Panc1 (cell line): ENCODE measurements at regions of chr19 and their contacts with region 1.

Region 1: GRCh38 chr19:3880471-3881271 is at the start of gene ATCAY:
- DNase-seq: no peak
- ATAC-seq: no peak; the same call in 1 of the 2 replicates
- H3K4me3 ChIP-seq: peak within 1 kb of the TSS in 1 of 2 experiments; percentile 4; a peak in 1 of 4 replicates
- H3K27ac ChIP-seq: no peak within 1 kb of the TSS
- H3K4me1 ChIP-seq: no peaks in the 10 kb centered on the region
- H3K27me3 ChIP-seq: no peaks in the 10 kb centered on the region
- CTCF ChIP-seq: no peak
- total RNA-seq, gene ATCAY: 0.15 TPM

Region 2: GRCh38 chr19:3893509-3894179 is 13.0 kb after region 1 on chr19:
- CTCF ChIA-PET with region 1: interaction called, 12 read pairs
- POLR2A ChIA-PET with region 1: no interaction called
- in situ Hi-C with region 1: no loop called
- intact Hi-C with region 1: no loop called
- DNase-seq: no peak
- ATAC-seq: peak; percentile 34; the same call in 1 of the 2 replicates
- H3K4me3 ChIP-seq: no peak overlapping the region
- H3K27ac ChIP-seq: no peak overlapping the region
- H3K4me1 ChIP-seq: no peaks in the 10 kb centered on the region
- H3K27me3 ChIP-seq: no peaks in the 10 kb centered on the region
- CTCF ChIP-seq: no peak

Region 3: DNA sequence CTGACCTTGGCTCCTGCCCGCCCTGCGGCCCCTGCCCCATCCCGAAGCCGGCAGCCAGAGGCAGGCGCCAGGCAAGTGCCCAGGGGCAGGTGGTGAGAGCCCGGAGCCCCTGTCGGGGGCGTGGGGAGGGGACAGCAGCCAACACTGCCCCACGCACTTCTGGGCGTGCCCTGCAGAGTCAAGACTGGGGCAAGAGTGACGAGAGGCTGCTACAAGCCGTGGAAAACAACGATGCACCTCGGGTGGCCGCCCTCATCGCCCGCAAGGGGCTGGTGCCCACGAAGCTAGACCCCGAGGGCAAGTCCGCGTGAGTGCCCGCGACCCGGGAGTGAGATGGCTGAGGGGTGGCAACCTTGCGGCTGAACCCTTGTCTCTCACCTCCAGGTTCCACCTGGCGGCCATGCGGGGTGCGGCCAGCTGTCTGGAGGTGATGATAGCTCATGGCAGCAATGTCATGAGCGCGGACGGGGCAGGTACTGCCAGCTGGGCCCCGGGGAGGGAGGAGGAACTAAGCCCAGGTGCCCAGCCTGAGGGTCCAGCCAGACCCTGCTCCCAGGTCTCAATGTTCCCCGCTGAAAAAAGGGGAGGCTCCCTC is 319.1 kb after region 1 on chr19:
- CTCF ChIA-PET with region 1: no interaction called
- POLR2A ChIA-PET with region 1: no interaction called
- in situ Hi-C with region 1: no loop called
- intact Hi-C with region 1: no loop called
- DNase-seq: no peak
- ATAC-seq: peak; percentile 54; the same call in 1 of the 2 replicates
- H3K4me3 ChIP-seq: no peak overlapping the region
- H3K27ac ChIP-seq: no peak overlapping the region
- H3K4me1 ChIP-seq: peaks cover 3% of the 10 kb centered on the region; the same call in 1 of the 2 replicates
- H3K27me3 ChIP-seq: peaks cover 3% of the 10 kb centered on the region; the same call in 1 of the 2 replicates
- CTCF ChIP-seq: no peak; the same call in 1 of the 2 replicates